Activated B cell treated with CpG ODN at 0.5 μM for 24 hours (primary cell): ENCODE measurements at regions of chr2 and their contacts with region 1.

Region 1: GRCh38 chr2:101710471-101711318 is 13.2 kb downstream of the MAP4K4 start:
- DNase-seq: no peak
- ATAC-seq: peak; percentile 78
- H3K4me3 Mint-ChIP-seq: peak overlapping the region; percentile 65
- H3K27ac Mint-ChIP-seq: peak overlapping the region; percentile 85
- H3K4me1 Mint-ChIP-seq: peaks cover 53% of the 10 kb centered on the region
- H3K27me3 Mint-ChIP-seq: no peaks in the 10 kb centered on the region
- CTCF ChIP-seq: no peak

Region 2: GRCh38 chr2:101758001-101758400 is 47.3 kb after region 1 on chr2:
- CTCF ChIA-PET with region 1: no interaction called
- POLR2A ChIA-PET with region 1: interaction called, 15 read pairs
- intact Hi-C with region 1: no loop called
- DNase-seq: no peak
- ATAC-seq: no peak
- H3K4me3 Mint-ChIP-seq: peak overlapping the region; percentile 60
- H3K27ac Mint-ChIP-seq: peak overlapping the region; percentile 53
- H3K4me1 Mint-ChIP-seq: peaks cover 82% of the 10 kb centered on the region
- H3K27me3 Mint-ChIP-seq: no peaks in the 10 kb centered on the region
- CTCF ChIP-seq: no peak

Region 3: DNA sequence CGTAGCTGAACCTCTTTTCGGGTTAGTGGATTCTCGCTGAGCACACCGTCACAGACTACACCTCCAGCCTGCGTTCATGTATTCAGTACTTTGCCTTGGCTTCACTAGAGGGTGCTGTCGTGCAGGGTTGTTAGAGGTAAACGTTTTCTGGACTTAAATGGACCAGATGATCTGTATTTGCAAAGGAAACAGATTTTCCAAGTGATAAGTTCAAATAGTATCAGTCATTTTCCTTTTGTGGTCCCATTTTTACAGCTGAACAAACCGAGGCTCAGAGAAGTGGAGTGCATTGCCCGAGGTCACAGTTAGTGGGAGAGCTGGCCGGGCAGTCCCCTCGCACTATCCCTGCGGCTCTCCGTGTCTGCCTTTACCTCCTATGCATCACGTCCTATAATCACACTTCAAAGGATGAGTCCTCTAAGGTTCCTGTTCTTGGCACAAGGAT is 112.7 kb after region 1 on chr2:
- CTCF ChIA-PET with region 1: interaction called, 11 read pairs
- POLR2A ChIA-PET with region 1: no interaction called
- intact Hi-C with region 1: no loop called
- DNase-seq: no peak
- ATAC-seq: peak; percentile 86
- H3K4me3 Mint-ChIP-seq: no peak overlapping the region
- H3K27ac Mint-ChIP-seq: peak overlapping the region; percentile 57
- H3K4me1 Mint-ChIP-seq: peaks cover 68% of the 10 kb centered on the region
- H3K27me3 Mint-ChIP-seq: no peaks in the 10 kb centered on the region
- CTCF ChIP-seq: no peak